ENCODE measurements at regions of chr9 and their contacts with region 1.

Region 1: GRCh38 chr9:32968101-32969011 is 33.1 kb downstream of the APTX start:
- DNase-seq: peak; percentile 67

Region 2: GRCh38 chr9:32579706-32580331 is 388.5 kb before region 1 on chr9:
- in situ Hi-C with region 1: loop called (anchors 25 kb)
- DNase-seq: peak; percentile 63

Region 3: GRCh38 chr9:33124751-33125381 is 156.5 kb after region 1 on chr9:
- in situ Hi-C with region 1: no loop called
- DNase-seq: no peak

Measured in KBM-7 (cell line).